Activated CD4-positive, alpha-beta T cell treated with anti-CD3 and anti-CD28 coated beads for 36 hours (primary cell): ENCODE measurements at regions of chr2 and their contacts with region 1.

Region 1: DNA sequence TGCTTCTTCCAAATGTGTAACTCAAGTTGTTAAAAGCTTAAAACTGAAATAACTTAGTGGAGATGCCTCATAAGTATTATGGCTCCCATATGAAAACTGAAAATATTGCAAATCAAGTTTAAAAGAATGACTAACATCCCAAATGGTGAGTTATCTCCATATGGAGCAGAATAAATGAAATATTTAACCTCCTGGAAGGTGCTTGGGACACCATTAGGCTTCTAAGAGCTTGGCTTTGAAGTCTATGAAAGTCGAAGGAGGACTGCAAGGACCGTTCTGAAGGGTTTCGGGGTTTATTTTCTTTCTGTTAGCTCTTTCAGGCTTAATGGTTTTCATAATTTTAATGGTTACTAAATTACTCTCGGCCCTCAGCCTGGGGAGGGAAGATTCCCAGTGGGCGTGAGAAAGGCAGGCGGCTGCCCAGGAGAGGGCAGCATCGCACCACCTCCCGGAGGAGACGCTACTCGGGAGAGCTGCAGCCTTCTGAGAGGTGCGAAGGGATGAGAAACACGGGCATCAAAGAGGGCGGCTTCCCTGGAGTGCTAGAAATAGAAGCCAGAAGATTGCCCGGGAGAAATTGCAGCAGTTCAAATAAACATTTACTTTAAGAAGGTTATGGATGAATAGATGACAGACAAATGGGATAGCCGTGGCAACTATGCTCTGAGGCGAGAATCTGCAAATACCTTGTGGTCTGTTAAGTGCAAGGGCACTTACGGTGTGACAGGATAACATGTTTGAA is 43.1 kb downstream of the MAP3K19 start:
- DNase-seq: peak; percentile 85
- ATAC-seq: peak; percentile 96
- H3K4me3 Mint-ChIP-seq: no peak overlapping the region
- H3K27ac Mint-ChIP-seq: no peak overlapping the region
- H3K4me1 Mint-ChIP-seq: peaks cover 4% of the 10 kb centered on the region
- H3K27me3 Mint-ChIP-seq: peaks cover 11% of the 10 kb centered on the region

Region 2: GRCh38 chr2:135157856-135158255 is 153.7 kb after region 1 on chr2:
- CTCF ChIA-PET with region 1: interaction called, 6 read pairs
- POLR2A ChIA-PET with region 1: no interaction called
- intact Hi-C with region 1: loop called in 1 of 2 experiments (anchors 5 kb)
- DNase-seq: no peak
- ATAC-seq: no peak
- H3K4me3 Mint-ChIP-seq: no peak overlapping the region
- H3K27ac Mint-ChIP-seq: peak overlapping the region; percentile 19
- H3K4me1 Mint-ChIP-seq: peaks cover 24% of the 10 kb centered on the region
- H3K27me3 Mint-ChIP-seq: no peaks in the 10 kb centered on the region

Region 3: GRCh38 chr2:135258193-135258592 is 254.0 kb after region 1 on chr2:
- CTCF ChIA-PET with region 1: interaction called, 4 read pairs
- POLR2A ChIA-PET with region 1: no interaction called
- intact Hi-C with region 1: loop called (anchors 1 to 10 kb)
- DNase-seq: peak; percentile 8
- ATAC-seq: no peak
- H3K4me3 Mint-ChIP-seq: no peak overlapping the region
- H3K27ac Mint-ChIP-seq: no peak overlapping the region
- H3K4me1 Mint-ChIP-seq: no peaks in the 10 kb centered on the region
- H3K27me3 Mint-ChIP-seq: no peaks in the 10 kb centered on the region

Region 4: GRCh38 chr2:135531231-135532228 is 527.4 kb after region 1 on chr2 and contains the start of gene R3HDM1:
- CTCF ChIA-PET with region 1: interaction called, 5 read pairs
- POLR2A ChIA-PET with region 1: no interaction called
- intact Hi-C with region 1: loop called in 1 of 2 experiments (anchors 10 kb)
- DNase-seq: peak; percentile 96
- ATAC-seq: peak; percentile 88
- H3K4me3 Mint-ChIP-seq: no peak within 1 kb of the TSS
- H3K27ac Mint-ChIP-seq: peak within 1 kb of the TSS; percentile 84
- H3K4me1 Mint-ChIP-seq: peaks cover 32% of the 10 kb centered on the region
- H3K27me3 Mint-ChIP-seq: no peaks in the 10 kb centered on the region
- total RNA-seq, gene R3HDM1: 62.6 to 100.0 TPM

Region 5: GRCh38 chr2:135709992-135710391 is 705.8 kb after region 1 on chr2:
- CTCF ChIA-PET with region 1: interaction called, 54 read pairs
- POLR2A ChIA-PET with region 1: no interaction called
- intact Hi-C with region 1: loop called (anchors 1 kb)
- DNase-seq: peak; percentile 84
- ATAC-seq: peak; percentile 74
- H3K4me3 Mint-ChIP-seq: no peak overlapping the region
- H3K27ac Mint-ChIP-seq: no peak overlapping the region
- H3K4me1 Mint-ChIP-seq: no peaks in the 10 kb centered on the region
- H3K27me3 Mint-ChIP-seq: no peaks in the 10 kb centered on the region